B cell (primary cell): ENCODE measurements at regions of chr20 and their contacts with region 1.

Region 1: GRCh38 chr20:462199-462991 is at the start of gene TBC1D20:
- DNase-seq: peak; percentile 94
- ATAC-seq: peak; percentile 95
- H3K4me3 ChIP-seq: peak within 1 kb of the TSS; percentile 58 to 83 (median 76)
- H3K4me3 Mint-ChIP-seq: peak within 1 kb of the TSS; percentile 94
- H3K27ac ChIP-seq: peak within 1 kb of the TSS; percentile 61 to 85
- H3K27ac Mint-ChIP-seq: peak within 1 kb of the TSS; percentile 95
- H3K4me1 ChIP-seq: peaks cover 14 to 17% of the 10 kb centered on the region in 2 donors
- H3K4me1 Mint-ChIP-seq: peaks cover 37% of the 10 kb centered on the region
- H3K27me3 ChIP-seq: peaks cover 0 to 1% (median 0%) of the 10 kb centered on the region in 4 experiments
- H3K27me3 Mint-ChIP-seq: peaks cover 3% of the 10 kb centered on the region
- CTCF ChIP-seq: no peak
- total RNA-seq, gene TBC1D20: 37.9 and 40.0 TPM in 2 replicates

Region 2: DNA sequence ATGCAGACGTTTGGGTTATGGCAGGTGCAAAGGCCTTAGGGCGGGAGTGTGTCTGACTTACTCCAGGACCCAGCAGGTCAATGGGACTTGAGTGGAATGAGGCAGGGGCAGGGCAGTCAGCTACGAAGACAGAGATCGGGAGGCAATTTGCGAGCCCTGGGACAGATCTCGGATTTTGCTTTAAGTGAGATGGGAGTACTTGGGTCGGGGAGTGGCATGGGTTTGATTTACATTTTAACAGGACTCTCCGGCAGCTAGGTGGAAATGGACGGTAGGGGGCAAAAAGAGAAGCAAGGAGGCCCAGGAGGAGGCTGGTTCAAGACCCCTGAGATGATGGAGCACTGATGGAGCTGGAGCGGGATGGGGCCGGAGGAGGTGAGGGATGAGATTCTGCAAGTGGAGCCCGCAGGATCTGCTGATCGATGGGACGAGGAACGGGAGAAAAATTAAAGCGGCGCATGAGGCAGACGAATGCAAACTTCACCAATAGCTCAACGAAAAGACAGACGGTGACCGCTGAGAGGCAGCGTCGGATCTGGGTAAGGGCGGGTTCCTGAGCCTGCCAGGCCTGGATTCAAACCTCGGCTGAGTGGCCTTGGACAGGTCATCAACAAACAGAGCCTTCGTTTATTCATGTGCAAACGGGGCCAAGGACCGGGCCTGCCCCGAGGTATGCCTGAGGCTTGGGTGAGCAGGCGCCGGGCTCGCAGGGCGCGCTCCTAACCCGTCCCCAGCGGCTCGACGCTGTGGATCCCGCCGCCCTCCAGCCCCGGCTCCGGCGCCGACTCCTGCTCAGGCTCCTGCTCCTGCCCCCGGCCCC is 55.1 kb before region 1 on chr20:
- CTCF ChIA-PET with region 1: interaction called, 9 read pairs
- POLR2A ChIA-PET with region 1: interaction called, 7 read pairs
- intact Hi-C with region 1: loop called (anchors 1 kb)
- DNase-seq: peak; percentile 81
- ATAC-seq: peak; percentile 69
- H3K4me3 ChIP-seq: peak overlapping the region; percentile 28 to 99 (median 96)
- H3K4me3 Mint-ChIP-seq: peak overlapping the region; percentile 92
- H3K27ac ChIP-seq: peak overlapping the region; percentile 18 to 64
- H3K27ac Mint-ChIP-seq: peak overlapping the region; percentile 96
- H3K4me1 ChIP-seq: peaks cover 30 to 33% of the 10 kb centered on the region in 2 donors
- H3K4me1 Mint-ChIP-seq: peaks cover 42% of the 10 kb centered on the region
- H3K27me3 ChIP-seq: no peaks in the 10 kb centered on the region
- H3K27me3 Mint-ChIP-seq: no peaks in the 10 kb centered on the region
- CTCF ChIP-seq: peak; percentile 64

Region 3: GRCh38 chr20:478949-479429 is 16.6 kb after region 1 on chr20:
- CTCF ChIA-PET with region 1: interaction called, 9 read pairs
- POLR2A ChIA-PET with region 1: interaction called, 4 read pairs
- intact Hi-C with region 1: loop called (anchors 1 kb)
- DNase-seq: peak; percentile 79
- ATAC-seq: peak; percentile 64
- H3K4me3 ChIP-seq: no peak overlapping the region
- H3K4me3 Mint-ChIP-seq: no peak overlapping the region
- H3K27ac ChIP-seq: no peak overlapping the region
- H3K27ac Mint-ChIP-seq: peak overlapping the region; percentile 50
- H3K4me1 ChIP-seq: no peaks in the 10 kb centered on the region
- H3K4me1 Mint-ChIP-seq: peaks cover 2% of the 10 kb centered on the region
- H3K27me3 ChIP-seq: no peaks in the 10 kb centered on the region
- H3K27me3 Mint-ChIP-seq: no peaks in the 10 kb centered on the region
- CTCF ChIP-seq: peak; percentile 85

Region 4: GRCh38 chr20:543369-544152 is 81.2 kb after region 1 on chr20 and contains the start of gene CSNK2A1:
- CTCF ChIA-PET with region 1: no interaction called
- POLR2A ChIA-PET with region 1: no interaction called
- intact Hi-C with region 1: loop called (anchors 1 kb)
- DNase-seq: peak; percentile 99
- ATAC-seq: peak; percentile 91
- H3K4me3 ChIP-seq: peak within 1 kb of the TSS; percentile 30 to 98 (median 85)
- H3K4me3 Mint-ChIP-seq: peak within 1 kb of the TSS; percentile 95
- H3K27ac ChIP-seq: peak within 1 kb of the TSS; percentile 93 to 99
- H3K27ac Mint-ChIP-seq: peak within 1 kb of the TSS; percentile 100
- H3K4me1 ChIP-seq: peaks cover 33 to 36% of the 10 kb centered on the region in 2 donors
- H3K4me1 Mint-ChIP-seq: peaks cover 53% of the 10 kb centered on the region
- H3K27me3 ChIP-seq: peaks cover 0 to 4% (median 2%) of the 10 kb centered on the region in 4 experiments
- H3K27me3 Mint-ChIP-seq: peaks cover 4% of the 10 kb centered on the region
- CTCF ChIP-seq: no peak
- total RNA-seq, gene CSNK2A1: 125 and 135 TPM in 2 replicates

Region 5: DNA sequence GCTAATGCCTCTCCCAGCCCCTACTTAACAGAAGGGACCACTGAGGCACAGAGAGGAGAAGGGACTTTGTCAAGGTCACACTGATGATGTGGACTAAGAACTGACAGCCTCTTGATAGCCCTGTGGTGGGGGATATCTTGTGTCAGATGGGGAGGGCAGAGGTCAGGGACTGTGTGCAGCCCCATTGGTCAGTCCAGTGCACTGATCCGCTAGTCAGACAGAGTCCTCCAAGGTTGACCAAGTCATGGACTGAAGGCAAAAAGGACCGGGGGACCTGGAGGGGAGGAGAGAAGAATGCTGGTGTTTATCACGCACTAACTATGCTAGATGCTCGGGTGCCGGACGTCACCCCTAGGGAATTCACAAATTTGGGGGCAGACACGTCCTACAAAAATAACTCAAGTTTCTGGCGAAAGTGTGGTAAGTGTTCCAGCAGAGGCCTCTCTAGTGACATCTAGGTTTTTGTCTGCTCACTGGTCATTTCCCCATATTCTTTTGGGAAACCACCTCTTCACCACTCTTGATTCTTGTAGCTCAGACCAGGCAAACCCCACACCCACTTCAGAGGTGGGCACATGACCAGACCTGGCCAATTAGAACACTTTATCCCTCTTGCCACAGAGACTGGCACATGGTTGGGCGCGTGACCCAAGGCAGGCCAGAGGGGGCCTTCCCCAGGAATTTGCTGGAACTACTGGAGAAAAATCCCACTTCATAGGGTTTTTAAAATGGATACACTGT is 126.7 kb after region 1 on chr20:
- CTCF ChIA-PET with region 1: no interaction called
- POLR2A ChIA-PET with region 1: no interaction called
- intact Hi-C with region 1: no loop called
- DNase-seq: no peak
- ATAC-seq: no peak
- H3K4me3 ChIP-seq: no peak overlapping the region
- H3K4me3 Mint-ChIP-seq: no peak overlapping the region
- H3K27ac ChIP-seq: no peak overlapping the region
- H3K27ac Mint-ChIP-seq: no peak overlapping the region
- H3K4me1 ChIP-seq: no peaks in the 10 kb centered on the region
- H3K4me1 Mint-ChIP-seq: peaks cover 4% of the 10 kb centered on the region
- H3K27me3 ChIP-seq: peaks cover 0 to 4% (median 0%) of the 10 kb centered on the region in 4 experiments
- H3K27me3 Mint-ChIP-seq: peaks cover 26% of the 10 kb centered on the region
- CTCF ChIP-seq: no peak